ENCODE measurements at regions of chr6 and their contacts with region 1.

Region 1: GRCh38 chr6:30678964-30679726 is 6.3 kb upstream of the DHX16 start:
- DNase-seq: peak; percentile 82
- H3K4me3 Mint-ChIP-seq: peak overlapping the region; percentile 41
- H3K27ac Mint-ChIP-seq: no peak overlapping the region
- H3K4me1 Mint-ChIP-seq: peaks cover 28% of the 10 kb centered on the region
- H3K27me3 Mint-ChIP-seq: no peaks in the 10 kb centered on the region
- CTCF ChIP-seq: peak; percentile 98

Region 2: GRCh38 chr6:30378290-30378937 is 300.7 kb before region 1 on chr6:
- CTCF ChIA-PET with region 1: no interaction called
- POLR2A ChIA-PET with region 1: no interaction called
- intact Hi-C with region 1: no loop called
- DNase-seq: peak; percentile 64
- H3K4me3 Mint-ChIP-seq: no peak overlapping the region
- H3K27ac Mint-ChIP-seq: no peak overlapping the region
- H3K4me1 Mint-ChIP-seq: no peaks in the 10 kb centered on the region
- H3K27me3 Mint-ChIP-seq: peaks cover 91% of the 10 kb centered on the region
- CTCF ChIP-seq: no peak

Region 3: DNA sequence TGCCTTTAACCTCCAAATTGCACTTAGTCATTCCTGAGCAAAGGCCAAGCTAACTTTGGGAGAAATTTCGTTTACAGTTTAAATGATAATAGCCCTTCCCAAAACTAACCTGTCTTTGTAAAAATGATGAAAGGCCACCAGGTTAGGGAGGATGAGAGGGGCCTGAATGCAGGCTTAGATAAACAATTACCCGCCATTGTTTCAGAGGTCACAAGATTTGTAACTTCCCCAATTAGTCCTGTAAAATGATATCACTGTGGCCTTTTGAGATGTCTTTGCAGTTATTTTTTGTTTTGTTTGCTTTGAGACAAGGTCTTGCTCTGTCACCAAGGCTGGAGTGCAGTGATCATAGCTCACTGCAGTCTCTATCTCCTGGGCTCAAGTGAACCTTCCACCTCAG is 149.1 kb before region 1 on chr6:
- CTCF ChIA-PET with region 1: no interaction called
- POLR2A ChIA-PET with region 1: no interaction called
- intact Hi-C with region 1: no loop called
- DNase-seq: no peak
- H3K4me3 Mint-ChIP-seq: no peak overlapping the region
- H3K27ac Mint-ChIP-seq: no peak overlapping the region
- H3K4me1 Mint-ChIP-seq: no peaks in the 10 kb centered on the region
- H3K27me3 Mint-ChIP-seq: no peaks in the 10 kb centered on the region
- CTCF ChIP-seq: no peak

Region 4: GRCh38 chr6:30600451-30600961 is 78.6 kb before region 1 on chr6:
- CTCF ChIA-PET with region 1: no interaction called
- POLR2A ChIA-PET with region 1: no interaction called
- intact Hi-C with region 1: no loop called
- DNase-seq: peak; percentile 20
- H3K4me3 Mint-ChIP-seq: no peak overlapping the region
- H3K27ac Mint-ChIP-seq: no peak overlapping the region
- H3K4me1 Mint-ChIP-seq: no peaks in the 10 kb centered on the region
- H3K27me3 Mint-ChIP-seq: no peaks in the 10 kb centered on the region
- CTCF ChIP-seq: no peak

Region 5: GRCh38 chr6:30700340-30700739 is 21.2 kb after region 1 on chr6:
- CTCF ChIA-PET with region 1: interaction called, 12 read pairs
- POLR2A ChIA-PET with region 1: interaction called, 20 read pairs
- intact Hi-C with region 1: no loop called
- DNase-seq: no peak
- H3K4me3 Mint-ChIP-seq: no peak overlapping the region
- H3K27ac Mint-ChIP-seq: no peak overlapping the region
- H3K4me1 Mint-ChIP-seq: peaks cover 6% of the 10 kb centered on the region
- H3K27me3 Mint-ChIP-seq: no peaks in the 10 kb centered on the region
- CTCF ChIP-seq: no peak

Region 6: DNA sequence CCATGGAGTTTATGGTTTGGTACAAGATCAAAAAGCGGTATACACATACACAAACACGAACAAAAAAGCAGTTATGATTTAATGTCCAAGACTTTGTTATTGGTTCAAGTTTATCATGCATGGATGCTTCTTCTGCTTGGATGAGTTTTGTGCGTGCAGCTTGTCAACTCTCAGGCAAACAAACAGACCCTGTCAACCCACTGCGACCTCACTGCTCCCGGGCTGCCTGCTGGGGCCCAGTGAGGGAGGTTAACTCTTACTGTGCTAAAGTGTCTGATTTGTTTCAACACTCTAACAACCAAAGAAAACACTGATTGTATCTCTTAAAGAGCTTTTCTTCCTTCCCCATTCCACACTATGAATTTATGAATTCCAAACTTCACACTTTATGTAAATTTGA is 178.4 kb after region 1 on chr6:
- CTCF ChIA-PET with region 1: no interaction called
- POLR2A ChIA-PET with region 1: no interaction called
- intact Hi-C with region 1: no loop called
- DNase-seq: no peak
- H3K4me3 Mint-ChIP-seq: no peak overlapping the region
- H3K27ac Mint-ChIP-seq: no peak overlapping the region
- H3K4me1 Mint-ChIP-seq: peaks cover 5% of the 10 kb centered on the region
- H3K27me3 Mint-ChIP-seq: no peaks in the 10 kb centered on the region
- CTCF ChIP-seq: no peak